HCT116 (cell line): ENCODE measurements at regions of chr3 and their contacts with region 1.

Region 1: GRCh38 chr3:159416856-159417255 is 571.8 kb upstream of the IL12A start:
- DNase-seq: no peak
- ATAC-seq: no peak
- H3K4me3 ChIP-seq: no peak overlapping the region
- H3K27ac ChIP-seq: no peak overlapping the region
- H3K4me1 ChIP-seq: peaks cover 14 to 23% of the 10 kb centered on the region in 2 experiments
- H3K27me3 ChIP-seq: no peaks in the 10 kb centered on the region
- CTCF ChIP-seq: no peak
- POLR2A ChIP-seq: no peak
- RAD21 ChIP-seq: no peak

Region 2: DNA sequence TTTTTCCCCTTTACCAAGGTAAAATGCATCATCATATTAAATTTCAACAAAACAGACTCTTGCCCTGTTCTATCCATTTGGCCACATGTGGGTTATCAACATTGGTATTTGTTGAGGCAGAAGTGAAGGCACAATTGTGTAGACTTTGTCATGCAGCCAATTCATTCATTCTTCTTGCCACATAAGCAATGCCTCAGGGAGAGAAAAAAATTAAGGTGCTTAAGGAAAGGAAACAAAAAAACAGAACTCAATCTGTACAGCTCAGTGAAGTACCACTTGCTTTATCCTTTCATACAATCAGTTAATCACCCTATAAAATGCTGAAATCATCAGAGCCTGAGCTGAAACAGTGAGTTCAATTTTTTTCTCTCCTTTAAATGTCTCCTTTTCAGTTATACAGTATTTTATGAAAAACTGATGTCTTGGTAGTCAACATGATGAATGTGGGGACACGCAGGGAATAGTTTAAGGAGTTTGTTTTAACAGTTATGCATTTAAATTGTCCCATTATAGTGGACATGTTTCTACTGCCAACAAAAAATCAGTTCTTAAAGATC is 26.1 kb before region 1 on chr3:
- CTCF ChIA-PET with region 1: no interaction called
- POLR2A ChIA-PET with region 1: no interaction called
- RAD21 ChIA-PET with region 1: no interaction called
- intact Hi-C with region 1: loop called (anchors 2 kb)
- DNase-seq: no peak
- ATAC-seq: no peak
- H3K4me3 ChIP-seq: no peak overlapping the region
- H3K27ac ChIP-seq: no peak overlapping the region
- H3K4me1 ChIP-seq: no peaks in the 10 kb centered on the region
- H3K27me3 ChIP-seq: no peaks in the 10 kb centered on the region
- CTCF ChIP-seq: no peak
- POLR2A ChIP-seq: no peak
- RAD21 ChIP-seq: no peak

Region 3: GRCh38 chr3:160319322-160319721 is 902.5 kb after region 1 on chr3:
- CTCF ChIA-PET with region 1: no interaction called
- POLR2A ChIA-PET with region 1: no interaction called
- RAD21 ChIA-PET with region 1: no interaction called
- intact Hi-C with region 1: no loop called
- DNase-seq: no peak
- ATAC-seq: no peak
- H3K4me3 ChIP-seq: no peak overlapping the region
- H3K27ac ChIP-seq: no peak overlapping the region
- H3K4me1 ChIP-seq: no peaks in the 10 kb centered on the region
- H3K27me3 ChIP-seq: no peaks in the 10 kb centered on the region
- CTCF ChIP-seq: no peak
- POLR2A ChIP-seq: no peak
- RAD21 ChIP-seq: no peak